Activated CD4-positive, alpha-beta memory T cell treated with anti-CD3 and anti-CD28 coated beads for 36 hours (primary cell): ENCODE measurements at regions of chr18 and their contacts with region 1.

Region 1: GRCh38 chr18:54269893-54270844 is 852 bp downstream of the POLI start:
- DNase-seq: peak; percentile 78
- H3K4me3 Mint-ChIP-seq: peak overlapping the region; percentile 78
- H3K27ac Mint-ChIP-seq: peak overlapping the region; percentile 94
- H3K4me1 Mint-ChIP-seq: peaks cover 29% of the 10 kb centered on the region
- H3K27me3 Mint-ChIP-seq: no peaks in the 10 kb centered on the region

Region 2: GRCh38 chr18:54217624-54218023 is 52.5 kb before region 1 on chr18:
- CTCF ChIA-PET with region 1: interaction called, 70 read pairs
- POLR2A ChIA-PET with region 1: interaction called, 18 read pairs
- intact Hi-C with region 1: no loop called
- DNase-seq: no peak
- H3K4me3 Mint-ChIP-seq: no peak overlapping the region
- H3K27ac Mint-ChIP-seq: no peak overlapping the region
- H3K4me1 Mint-ChIP-seq: peaks cover 68% of the 10 kb centered on the region
- H3K27me3 Mint-ChIP-seq: no peaks in the 10 kb centered on the region

Region 3: GRCh38 chr18:54357660-54358494 is 87.7 kb after region 1 on chr18 and contains the starts of genes C18orf54 and STARD6:
- CTCF ChIA-PET with region 1: interaction called, 17 read pairs
- POLR2A ChIA-PET with region 1: interaction called, 12 read pairs
- intact Hi-C with region 1: loop called (anchors 2 kb)
- DNase-seq: peak; percentile 93
- H3K4me3 Mint-ChIP-seq: peak within 1 kb of the TSS; percentile 95
- H3K27ac Mint-ChIP-seq: peak within 1 kb of the TSS; percentile 81
- H3K4me1 Mint-ChIP-seq: peaks cover 14% of the 10 kb centered on the region
- H3K27me3 Mint-ChIP-seq: peaks cover 3% of the 10 kb centered on the region
- total RNA-seq, gene C18orf54: 11.7 to 12.2 TPM
- total RNA-seq, gene STARD6: not detected